Tibial artery (tissue), 4 donors: ENCODE measurements at regions of chr7 and their contacts with region 1.

Region 1: GRCh38 chr7:130896898-130897514 is 163.0 kb upstream of the KLF14 start:
- DNase-seq: no peak
- H3K4me3 ChIP-seq: no peak overlapping the region
- H3K27ac ChIP-seq: peak overlapping the region; percentile 73 to 82
- H3K4me1 ChIP-seq: peaks cover 0 to 80% (median 61%) of the 10 kb centered on the region in 4 donors
- H3K27me3 ChIP-seq: no peaks in the 10 kb centered on the region
- CTCF ChIP-seq: peak; percentile 76 to 82

Region 2: DNA sequence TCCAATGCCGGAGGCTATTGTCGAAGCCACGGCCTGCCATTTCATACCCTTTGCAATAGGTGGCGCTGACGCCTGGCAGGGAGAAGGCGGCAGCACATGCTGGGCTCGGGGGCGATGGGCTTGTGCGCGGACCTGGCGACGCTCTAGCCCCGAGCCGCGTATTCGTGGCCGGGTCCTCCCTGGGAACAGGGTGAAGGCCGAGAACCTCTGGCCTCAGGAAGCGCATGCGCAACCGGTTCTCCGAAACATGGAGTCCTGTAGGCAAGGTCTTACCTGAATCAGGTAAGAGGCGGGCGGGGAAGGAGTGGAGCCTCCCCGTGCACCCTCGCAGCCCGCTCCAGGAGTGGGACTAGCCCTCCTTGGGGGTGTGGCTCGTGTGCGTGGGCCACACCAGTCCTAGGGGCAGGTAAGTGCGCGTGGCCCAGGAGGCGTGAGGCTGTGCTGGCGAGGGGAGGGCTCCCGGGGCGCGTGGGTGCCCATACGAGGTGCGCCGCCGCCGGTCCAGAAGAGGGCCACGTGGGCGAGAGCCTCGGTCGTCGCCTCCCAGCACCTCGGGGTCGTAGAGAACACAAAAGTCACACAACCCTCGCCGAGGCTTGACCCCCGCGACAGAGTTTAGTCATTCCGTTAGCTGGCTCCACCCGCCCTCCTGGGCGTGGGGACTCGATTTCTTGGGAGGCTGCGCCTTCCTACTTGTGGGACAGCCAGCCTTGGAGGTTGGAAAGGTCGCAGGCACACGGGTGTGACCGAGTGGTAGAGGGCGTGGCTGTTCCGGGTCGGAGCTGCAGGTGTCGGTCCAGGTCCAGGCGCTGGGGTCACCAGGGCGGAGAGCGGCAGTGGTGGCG is 410.7 kb before region 1 on chr7:
- intact Hi-C with region 1: no loop called
- DNase-seq: no peak
- H3K4me3 ChIP-seq: peak overlapping the region; percentile 44 to 54
- H3K27ac ChIP-seq: no peak overlapping the region
- H3K4me1 ChIP-seq: peaks cover 0 to 38% (median 17%) of the 10 kb centered on the region in 4 donors
- H3K27me3 ChIP-seq: peaks cover 0 to 6% of the 10 kb centered on the region in 2 donors
- CTCF ChIP-seq: peak; percentile 24 to 53

Region 3: GRCh38 chr7:131007394-131008330 is 110.7 kb after region 1 on chr7:
- intact Hi-C with region 1: loop called (anchors 5 kb)
- DNase-seq: peak in 1 of 2 donors; percentile 65
- H3K4me3 ChIP-seq: no peak overlapping the region
- H3K27ac ChIP-seq: peak overlapping the region; percentile 53 to 55
- H3K4me1 ChIP-seq: peaks cover 0 to 71% (median 53%) of the 10 kb centered on the region in 4 donors
- H3K27me3 ChIP-seq: no peaks in the 10 kb centered on the region
- CTCF ChIP-seq: peak; percentile 40 to 44

Region 4: GRCh38 chr7:131040467-131040932 is 143.5 kb after region 1 on chr7:
- intact Hi-C with region 1: loop called (anchors 1 kb)
- DNase-seq: peak in 1 of 2 donors; percentile 63
- H3K4me3 ChIP-seq: no peak overlapping the region
- H3K27ac ChIP-seq: peak overlapping the region in 1 of 2 donors; percentile 5
- H3K4me1 ChIP-seq: peaks cover 0 to 59% (median 26%) of the 10 kb centered on the region in 4 donors
- H3K27me3 ChIP-seq: no peaks in the 10 kb centered on the region
- CTCF ChIP-seq: peak; percentile 79 to 81

Region 5: GRCh38 chr7:132211971-132212370 is 1315.0 kb after region 1 on chr7:
- intact Hi-C with region 1: no loop called
- DNase-seq: no peak
- H3K4me3 ChIP-seq: no peak overlapping the region
- H3K27ac ChIP-seq: no peak overlapping the region
- H3K4me1 ChIP-seq: no peaks in the 10 kb centered on the region
- H3K27me3 ChIP-seq: no peaks in the 10 kb centered on the region
- CTCF ChIP-seq: no peak